Dorsolateral prefrontal cortex (tissue), 120 donors: ENCODE measurements at regions of chr22 and their contacts with region 1.

Region 1: GRCh38 chr22:37643225-37643847 is 3.9 kb downstream of the SH3BP1 start:
- DNase-seq: peak; percentile 80 to 91 (median 88)
- H3K4me3 ChIP-seq: no peak overlapping the region
- H3K27ac ChIP-seq: peak overlapping the region in 6 of 59 donors; percentile 9 to 44 (median 24)
- H3K27me3 ChIP-seq: peaks cover 0 to 23% (median 0%) of the 10 kb centered on the region in 45 donors
- CTCF ChIP-seq: peak; percentile 82 to 97 (median 94)

Region 2: DNA sequence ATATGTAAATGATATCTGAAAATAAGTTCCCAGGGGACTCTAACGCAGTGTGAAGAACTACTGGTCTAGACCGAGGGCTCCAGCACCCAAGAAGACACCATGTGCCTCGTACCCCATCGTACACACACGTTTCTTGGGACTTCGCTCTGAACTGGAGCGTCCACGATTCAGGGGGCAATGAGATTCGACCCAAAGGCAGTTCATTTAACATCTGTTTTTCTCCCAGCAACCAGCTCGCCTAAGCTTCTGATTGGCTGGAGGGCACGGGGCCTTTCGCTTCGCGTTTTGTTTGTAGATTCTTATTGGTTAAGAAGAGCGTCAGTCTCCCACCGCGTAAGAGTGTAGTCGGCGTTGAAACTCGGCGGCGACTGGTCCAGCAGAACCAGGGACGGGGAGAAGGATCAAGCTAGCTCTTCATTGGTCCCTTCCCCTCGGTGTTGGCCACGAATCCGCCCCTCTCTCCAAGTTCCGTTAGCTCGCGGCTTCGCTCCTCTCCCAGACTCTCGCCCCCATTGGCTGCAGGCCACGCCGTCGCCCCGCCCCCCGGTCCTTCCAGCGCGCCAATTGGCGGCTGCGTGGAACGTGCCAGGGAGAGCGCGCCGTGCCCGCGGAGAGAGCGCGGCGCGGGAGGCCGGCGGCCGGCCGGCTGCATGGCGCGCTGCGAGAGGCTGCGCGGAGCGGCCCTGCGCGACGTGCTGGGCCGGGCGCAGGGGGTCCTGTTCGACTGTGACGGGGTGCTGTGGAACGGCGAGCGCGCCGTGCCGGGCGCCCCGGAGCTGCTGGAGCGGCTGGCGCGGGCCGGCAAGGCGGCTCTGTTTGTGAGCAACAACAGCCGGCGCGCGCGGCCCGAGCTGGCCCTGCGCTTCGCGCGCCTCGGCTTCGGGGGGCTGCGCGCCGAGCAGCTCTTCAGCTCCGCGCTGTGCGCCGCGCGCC is 15.1 kb after region 1 on chr22 and contains the start of gene PDXP:
- intact Hi-C with region 1: loop called in 1 of 2 experiments (anchors 2 kb)
- DNase-seq: peak; percentile 91 to 99 (median 98)
- H3K4me3 ChIP-seq: peak within 1 kb of the TSS; percentile 49 to 82 (median 71)
- H3K27ac ChIP-seq: peak within 1 kb of the TSS in 56 of 59 donors; percentile 20 to 92 (median 79)
- H3K27me3 ChIP-seq: no peaks in the 10 kb centered on the region
- CTCF ChIP-seq: peak in 10 of 56 donors; percentile 7 to 50 (median 23)
- total RNA-seq, gene PDXP: 62.4 to 280 (median 189) TPM

Region 3: GRCh38 chr22:37734964-37735451 is 91.7 kb after region 1 on chr22:
- intact Hi-C with region 1: loop called in 1 of 2 experiments (anchors 5 kb)
- DNase-seq: peak in 6 of 10 donors; percentile 18 to 56 (median 32)
- H3K4me3 ChIP-seq: no peak overlapping the region
- H3K27ac ChIP-seq: peak overlapping the region in 2 of 59 donors; percentile 0 to 10
- H3K27me3 ChIP-seq: no peaks in the 10 kb centered on the region
- CTCF ChIP-seq: peak in 51 of 56 donors; percentile 13 to 64 (median 38)